ENCODE measurements at regions of chr1 and their contacts with region 1.

Region 1: DNA sequence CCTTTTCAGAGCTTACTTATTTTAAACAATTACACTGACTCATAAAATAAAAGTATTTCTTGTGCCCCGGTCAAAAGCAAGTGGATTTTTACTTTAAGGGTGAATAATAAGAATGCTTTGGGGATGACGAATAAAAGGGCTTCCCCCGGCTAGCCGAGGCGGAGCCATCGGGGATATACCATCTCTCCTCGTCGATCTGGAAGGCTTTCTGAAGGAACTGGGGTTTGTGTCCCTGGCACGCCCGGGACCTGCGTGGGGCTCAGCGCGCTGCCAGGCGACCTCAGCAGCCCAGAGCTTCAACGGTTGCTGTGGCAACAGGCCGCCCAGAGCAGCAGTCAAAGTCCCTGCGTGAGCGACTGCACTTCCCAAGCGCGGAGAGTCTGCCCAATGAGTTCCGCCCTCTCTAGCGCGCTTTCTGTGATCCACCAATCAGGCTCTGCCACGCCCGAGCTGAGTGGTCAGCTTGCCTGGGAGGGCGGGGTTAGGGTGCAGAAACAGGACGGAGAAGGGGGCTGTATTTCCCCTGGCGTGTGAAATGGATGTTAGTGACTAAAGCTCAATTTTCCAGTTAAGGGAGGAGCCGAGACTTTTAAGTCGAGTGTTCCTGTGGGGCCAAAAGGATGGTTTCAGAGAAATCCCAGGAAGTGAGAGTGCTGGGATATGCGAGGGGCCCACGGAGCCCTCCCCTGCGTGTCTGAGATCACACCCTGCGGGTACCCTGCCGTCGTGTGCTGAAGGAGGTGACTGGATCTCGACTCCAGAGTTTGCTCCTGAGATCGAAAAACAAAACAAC is 33.0 kb upstream of the MGST3 start:
- DNase-seq: peak; percentile 96 to 97
- ATAC-seq: peak; percentile 99 to 100 (median 99)
- H3K4me3 ChIP-seq: peak overlapping the region; percentile 19 to 77 (median 63)
- H3K27ac ChIP-seq: peak overlapping the region in 9 of 10 donors; percentile 46 to 82 (median 65)
- H3K4me1 ChIP-seq: peaks cover 0 to 28% (median 6%) of the 10 kb centered on the region in 9 donors
- H3K27me3 ChIP-seq: peaks cover 0 to 43% (median 14%) of the 10 kb centered on the region in 7 donors
- CTCF ChIP-seq: no peak

Region 2: DNA sequence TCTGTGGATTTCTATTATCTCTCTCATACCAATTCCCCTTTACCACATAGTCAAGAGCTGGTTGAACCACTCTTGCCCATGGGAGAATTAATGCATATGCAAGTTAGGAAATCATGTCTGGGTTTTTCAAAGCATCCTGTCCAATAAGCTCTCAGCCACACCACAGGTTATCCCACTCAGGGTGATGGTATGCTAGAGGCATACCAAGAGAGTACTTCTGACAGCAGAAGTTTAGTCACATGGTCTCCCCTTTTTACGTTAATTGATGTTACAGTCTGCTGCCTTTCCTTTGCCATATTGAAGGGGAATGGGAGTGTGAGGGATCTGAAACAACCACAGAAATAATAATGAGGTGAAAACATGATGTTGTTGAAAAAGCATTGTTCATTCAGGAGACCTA is 1174.9 kb before region 1 on chr1:
- intact Hi-C with region 1: no loop called
- DNase-seq: no peak
- ATAC-seq: no peak
- H3K4me3 ChIP-seq: no peak overlapping the region
- H3K27ac ChIP-seq: no peak overlapping the region
- H3K4me1 ChIP-seq: no peaks in the 10 kb centered on the region
- H3K27me3 ChIP-seq: no peaks in the 10 kb centered on the region
- CTCF ChIP-seq: no peak

Region 3: DNA sequence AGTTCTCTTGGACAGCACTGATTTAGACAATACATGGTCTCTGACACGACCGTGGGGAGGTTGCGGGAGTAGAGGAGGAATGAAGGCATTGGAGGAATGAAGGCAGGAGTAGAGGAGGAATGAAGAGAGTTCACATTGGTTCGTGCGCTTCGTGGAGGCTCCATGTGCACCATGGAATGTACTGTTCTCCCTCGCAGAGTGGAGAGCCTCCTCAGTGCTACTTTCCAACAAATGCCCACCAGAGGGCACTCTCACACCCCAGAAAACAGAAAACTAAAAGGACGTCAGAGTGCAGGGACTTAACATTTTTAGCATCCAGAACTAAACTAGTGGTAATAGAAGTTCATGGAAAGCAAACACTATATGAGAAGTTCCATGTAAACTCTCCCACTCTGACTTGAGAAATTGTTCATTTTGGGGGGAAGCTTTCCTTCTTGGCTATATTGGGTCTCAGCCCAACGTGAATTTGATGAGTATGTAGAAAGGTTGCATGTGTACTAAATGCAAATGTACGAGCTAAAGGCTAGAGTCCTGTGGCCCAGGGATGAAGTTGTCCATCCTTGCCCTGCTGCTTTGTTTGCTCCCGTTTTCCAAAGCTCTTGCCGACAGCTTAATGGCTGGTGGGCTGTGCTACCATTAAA is 453.2 kb before region 1 on chr1:
- intact Hi-C with region 1: loop called in 1 of 10 experiments (anchors 10 kb)
- DNase-seq: peak in 1 of 2 donors; percentile 36
- ATAC-seq: peak in 6 of 8 donors; percentile 42 to 86 (median 58)
- H3K4me3 ChIP-seq: no peak overlapping the region
- H3K27ac ChIP-seq: no peak overlapping the region
- H3K4me1 ChIP-seq: no peaks in the 10 kb centered on the region
- H3K27me3 ChIP-seq: peaks cover 0 to 75% (median 21%) of the 10 kb centered on the region in 7 donors
- CTCF ChIP-seq: peak; percentile 35 to 81 (median 74)

Region 4: DNA sequence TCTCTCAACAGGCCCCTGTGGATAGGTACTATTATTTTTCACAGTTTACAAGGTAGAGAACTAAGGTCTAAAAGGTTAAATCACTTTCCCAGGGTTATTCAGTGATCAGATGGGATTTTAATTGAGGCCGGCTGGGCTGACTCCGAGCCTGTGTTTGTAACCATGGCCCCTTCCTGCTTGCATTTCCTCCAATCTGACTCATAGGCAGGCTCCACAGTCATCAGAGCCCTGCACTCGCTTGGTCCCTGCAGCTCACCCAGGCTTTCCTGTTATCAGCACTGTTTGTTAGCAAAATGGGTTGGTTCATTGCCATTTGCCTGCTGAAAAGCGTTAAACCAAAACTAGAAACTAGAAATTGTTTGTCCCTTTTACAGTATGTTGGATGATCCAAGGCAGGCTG is 200.1 kb before region 1 on chr1:
- intact Hi-C with region 1: loop called in 6 of 10 experiments (anchors 1 to 5 kb)
- DNase-seq: peak; percentile 20 to 53
- ATAC-seq: peak; percentile 59 to 91 (median 85)
- H3K4me3 ChIP-seq: no peak overlapping the region
- H3K27ac ChIP-seq: peak overlapping the region in 8 of 10 donors; percentile 12 to 58 (median 35)
- H3K4me1 ChIP-seq: peaks cover 0 to 20% (median 11%) of the 10 kb centered on the region in 9 donors
- H3K27me3 ChIP-seq: peaks cover 0 to 83% (median 0%) of the 10 kb centered on the region in 7 donors
- CTCF ChIP-seq: no peak

Region 5: DNA sequence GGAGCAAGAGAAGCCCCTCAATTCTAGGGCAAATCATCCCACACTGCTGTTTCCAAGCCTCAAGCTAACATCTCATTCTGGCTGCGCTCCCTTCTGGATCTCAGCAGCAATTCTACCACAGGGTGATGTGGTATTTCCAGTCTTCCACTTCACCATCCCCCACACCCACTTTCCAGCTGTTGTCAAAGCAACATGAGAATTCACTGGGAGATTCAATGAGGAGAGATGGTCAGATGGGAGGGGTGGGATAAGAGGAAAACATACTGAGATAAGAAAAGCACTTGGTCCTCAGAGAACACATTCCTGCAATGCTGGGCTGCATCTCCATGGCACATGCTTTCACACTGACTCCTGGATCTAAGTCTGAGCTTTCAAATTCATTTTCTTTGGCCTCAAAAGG is 101.6 kb before region 1 on chr1:
- intact Hi-C with region 1: loop called in 1 of 10 experiments (anchors 10 kb)
- DNase-seq: no peak
- ATAC-seq: peak in 7 of 8 donors; percentile 27 to 72 (median 41)
- H3K4me3 ChIP-seq: no peak overlapping the region
- H3K27ac ChIP-seq: peak overlapping the region in 3 of 10 donors; percentile 28 to 57 (median 38)
- H3K4me1 ChIP-seq: peaks cover 0 to 29% (median 3%) of the 10 kb centered on the region in 9 donors
- H3K27me3 ChIP-seq: no peaks in the 10 kb centered on the region
- CTCF ChIP-seq: no peak

Region 6: DNA sequence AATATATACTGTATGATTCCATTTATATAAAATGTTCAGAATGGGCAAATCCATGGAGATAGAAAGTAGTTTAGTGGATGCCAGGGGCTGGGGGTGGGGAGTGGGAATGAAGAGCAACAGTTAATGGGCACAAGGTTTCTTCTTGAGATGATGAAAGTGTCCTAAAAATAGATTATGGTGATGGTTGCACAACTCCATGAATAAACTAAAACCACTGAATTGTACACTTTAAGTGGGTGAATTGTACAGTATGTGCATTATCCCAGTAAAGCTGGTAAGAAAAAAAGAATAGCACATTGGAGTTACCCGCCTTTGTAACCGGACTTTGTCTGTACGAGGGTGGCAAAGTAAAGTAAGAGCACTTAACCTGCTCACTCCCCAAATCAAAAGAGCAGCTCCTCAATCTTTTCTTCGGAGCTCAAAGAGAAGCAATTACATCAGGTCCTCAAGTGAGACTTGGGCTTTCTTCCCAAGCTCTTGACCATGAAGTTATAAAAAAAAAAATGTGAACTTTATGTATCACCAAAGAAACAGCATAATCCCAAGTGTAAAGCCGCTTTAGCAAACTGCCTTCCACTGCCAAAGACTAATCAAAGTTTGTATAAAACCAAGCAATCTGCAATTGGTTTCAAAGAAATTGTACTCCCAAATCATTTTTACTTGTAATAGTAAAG is 68.2 kb after region 1 on chr1:
- intact Hi-C with region 1: loop called in 1 of 10 experiments (anchors 10 kb)
- DNase-seq: no peak
- ATAC-seq: no peak
- H3K4me3 ChIP-seq: no peak overlapping the region
- H3K27ac ChIP-seq: no peak overlapping the region
- H3K4me1 ChIP-seq: peaks cover 0 to 22% (median 13%) of the 10 kb centered on the region in 9 donors
- H3K27me3 ChIP-seq: no peaks in the 10 kb centered on the region
- CTCF ChIP-seq: no peak

Region 7: DNA sequence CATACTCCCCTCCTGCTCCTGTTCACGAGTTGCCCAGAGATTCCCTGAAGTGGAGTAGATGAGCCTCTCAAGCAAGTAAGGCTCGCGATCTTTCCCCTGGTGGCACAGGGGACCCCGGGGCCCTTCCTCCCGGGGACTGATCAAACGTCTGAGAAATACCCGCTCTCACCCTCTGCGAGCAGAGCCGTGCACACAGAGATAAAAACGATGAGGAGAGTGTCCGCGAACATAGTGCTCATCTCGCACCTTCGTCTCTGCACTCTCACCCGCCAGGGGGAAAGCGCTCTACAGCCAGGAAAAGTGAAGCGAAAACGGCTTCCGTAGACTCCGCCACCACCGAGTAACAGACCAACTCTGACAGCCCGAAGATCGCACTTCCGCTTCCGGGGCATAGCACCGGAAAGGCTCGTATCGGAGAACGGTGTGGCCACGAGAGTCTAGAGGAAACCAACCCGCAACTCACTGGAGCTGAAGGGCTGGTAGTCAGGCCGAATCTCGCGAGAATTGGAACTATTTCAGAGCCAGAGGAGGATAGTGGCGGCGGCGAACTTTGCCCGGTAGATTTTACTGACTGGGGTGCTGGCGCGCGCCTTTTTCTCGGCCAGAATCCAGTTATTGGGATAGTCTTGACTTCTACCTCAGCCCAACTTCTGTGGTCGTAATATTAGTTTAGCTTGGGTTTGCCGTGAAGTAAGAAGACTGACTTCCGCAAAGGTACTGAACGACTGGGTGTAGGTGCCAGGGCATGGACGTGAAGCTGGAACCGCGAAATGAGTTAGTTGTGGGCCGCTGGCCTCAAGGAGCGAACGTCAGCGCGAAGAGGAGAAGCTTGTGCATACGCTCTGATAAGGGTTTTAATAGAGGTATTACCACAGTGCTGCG is 170.7 kb after region 1 on chr1 and contains the start of gene TMCO1:
- intact Hi-C with region 1: loop called in 1 of 10 experiments (anchors 5 kb)
- DNase-seq: peak; percentile 88 to 96
- ATAC-seq: peak; percentile 99 to 100 (median 100)
- H3K4me3 ChIP-seq: peak within 1 kb of the TSS; percentile 45 to 99 (median 77)
- H3K27ac ChIP-seq: peak within 1 kb of the TSS; percentile 18 to 95 (median 89)
- H3K4me1 ChIP-seq: peaks cover 0 to 61% (median 31%) of the 10 kb centered on the region in 9 donors
- H3K27me3 ChIP-seq: no peaks in the 10 kb centered on the region
- CTCF ChIP-seq: peak in 6 of 9 donors; percentile 14 to 45 (median 34)
- total RNA-seq, gene TMCO1: 41.1 to 61.3 (median 48.4) TPM

Measured in heart right ventricle (tissue), 16 donors.